ENCODE measurements at regions of chr1 and their contacts with region 1.

Region 1: DNA sequence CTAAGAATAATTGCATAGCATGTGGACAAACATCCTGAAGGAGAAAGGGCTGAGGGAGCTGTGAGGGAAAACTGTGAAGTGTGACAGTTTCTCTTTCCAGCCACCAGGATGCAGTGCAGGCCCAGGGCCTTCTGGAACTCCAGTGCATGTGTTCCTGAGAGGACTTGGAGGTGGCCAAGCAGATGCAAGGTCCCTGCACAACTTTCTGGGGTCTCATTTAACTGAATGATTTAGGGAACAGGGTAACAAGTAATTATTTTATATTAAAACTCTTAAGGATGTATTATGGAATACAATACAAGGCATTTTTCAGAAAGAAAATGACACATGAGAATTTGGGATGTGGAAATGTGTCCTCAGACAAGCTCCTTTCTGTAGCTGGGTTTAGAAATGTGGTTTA is 61.2 kb upstream of the MCOLN3 start:
- DNase-seq: peak; percentile 49 to 65
- ATAC-seq: peak; percentile 96 to 97
- H3K4me3 ChIP-seq: no peak overlapping the region
- H3K27ac ChIP-seq: no peak overlapping the region
- H3K4me1 ChIP-seq: no peaks in the 10 kb centered on the region
- CTCF ChIP-seq: peak; percentile 69
- EP300 ChIP-seq: no peak
- POLR2A ChIP-seq: no peak
- RAD21 ChIP-seq: peak; percentile 79 to 85

Region 2: GRCh38 chr1:85087659-85088407 is 21.6 kb before region 1 on chr1:
- CTCF ChIA-PET with region 1: no interaction called
- POLR2A ChIA-PET with region 1: no interaction called
- DNase-seq: no peak
- ATAC-seq: no peak
- H3K4me3 ChIP-seq: no peak overlapping the region
- H3K27ac ChIP-seq: no peak overlapping the region
- H3K4me1 ChIP-seq: no peaks in the 10 kb centered on the region
- CTCF ChIP-seq: no peak
- EP300 ChIP-seq: no peak
- POLR2A ChIP-seq: no peak
- RAD21 ChIP-seq: no peak

Region 3: DNA sequence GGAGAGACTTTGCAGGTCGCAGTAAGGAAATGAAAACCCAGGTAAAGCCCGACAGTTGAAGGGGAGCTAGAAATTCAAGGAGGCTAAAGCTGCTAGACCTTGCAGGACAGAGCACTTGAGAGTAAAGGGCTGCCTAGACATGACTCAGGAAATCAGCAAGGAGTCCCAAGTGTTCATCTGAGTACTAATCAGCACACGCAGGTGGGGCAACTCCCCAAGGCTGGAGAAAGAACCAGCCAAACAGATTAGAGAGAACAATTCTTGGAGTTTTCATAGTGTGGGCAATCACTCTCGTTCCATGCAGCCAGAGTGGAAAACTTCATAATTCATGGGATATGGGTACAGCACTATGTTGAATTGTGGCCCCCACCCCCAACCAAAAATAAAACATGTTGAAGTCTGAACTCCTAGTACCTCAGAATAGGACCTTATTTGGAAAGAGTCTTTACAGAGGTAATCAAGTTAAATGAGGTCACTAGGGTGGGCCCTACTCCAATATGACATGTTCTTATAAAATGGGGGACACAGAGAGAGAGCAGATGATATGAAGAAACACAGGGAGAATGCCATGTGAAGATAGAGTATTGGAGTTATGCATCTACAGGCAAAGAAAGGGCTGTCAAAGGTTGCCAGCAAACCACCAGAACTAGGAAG is 63.3 kb after region 1 on chr1:
- CTCF ChIA-PET with region 1: no interaction called
- POLR2A ChIA-PET with region 1: no interaction called
- DNase-seq: no peak
- ATAC-seq: no peak
- H3K4me3 ChIP-seq: no peak overlapping the region
- H3K27ac ChIP-seq: no peak overlapping the region
- H3K4me1 ChIP-seq: no peaks in the 10 kb centered on the region
- CTCF ChIP-seq: no peak
- EP300 ChIP-seq: no peak
- POLR2A ChIP-seq: no peak
- RAD21 ChIP-seq: no peak

Region 4: GRCh38 chr1:85244271-85245061 is 135.0 kb after region 1 on chr1:
- CTCF ChIA-PET with region 1: interaction called, 11 read pairs
- POLR2A ChIA-PET with region 1: no interaction called
- DNase-seq: no peak
- ATAC-seq: no peak
- H3K4me3 ChIP-seq: no peak overlapping the region
- H3K27ac ChIP-seq: no peak overlapping the region
- H3K4me1 ChIP-seq: no peaks in the 10 kb centered on the region
- CTCF ChIP-seq: no peak
- EP300 ChIP-seq: no peak
- POLR2A ChIP-seq: no peak
- RAD21 ChIP-seq: no peak

Measured in A549 (cell line).